MCF 10A (cell line): ENCODE measurements at regions of chr3 and their contacts with region 1.

Region 1: DNA sequence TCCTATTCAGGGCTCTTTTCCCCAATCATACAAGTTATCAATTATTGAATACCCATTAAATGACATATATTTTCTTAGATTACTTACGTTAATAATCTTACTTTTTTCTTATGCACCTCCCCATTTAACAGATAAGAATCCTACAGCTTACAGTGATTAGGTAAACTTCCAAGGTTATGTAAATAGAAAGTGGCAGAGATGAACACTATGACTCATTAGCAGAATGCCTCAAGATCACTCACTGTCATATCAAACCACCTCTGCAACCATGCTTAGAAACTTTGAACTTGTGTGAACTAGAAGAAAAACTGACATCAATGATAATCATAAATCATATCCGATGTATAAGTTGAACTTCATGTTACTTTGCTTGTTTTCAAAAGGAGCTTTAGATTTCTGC is 911.6 kb upstream of the ARPP21 start:
- DNase-seq: peak; percentile 22
- H3K4me3 Mint-ChIP-seq: no peak overlapping the region
- H3K27ac Mint-ChIP-seq: no peak overlapping the region
- H3K4me1 Mint-ChIP-seq: peaks cover 5% of the 10 kb centered on the region
- H3K27me3 Mint-ChIP-seq: no peaks in the 10 kb centered on the region
- CTCF ChIP-seq: no peak

Region 2: DNA sequence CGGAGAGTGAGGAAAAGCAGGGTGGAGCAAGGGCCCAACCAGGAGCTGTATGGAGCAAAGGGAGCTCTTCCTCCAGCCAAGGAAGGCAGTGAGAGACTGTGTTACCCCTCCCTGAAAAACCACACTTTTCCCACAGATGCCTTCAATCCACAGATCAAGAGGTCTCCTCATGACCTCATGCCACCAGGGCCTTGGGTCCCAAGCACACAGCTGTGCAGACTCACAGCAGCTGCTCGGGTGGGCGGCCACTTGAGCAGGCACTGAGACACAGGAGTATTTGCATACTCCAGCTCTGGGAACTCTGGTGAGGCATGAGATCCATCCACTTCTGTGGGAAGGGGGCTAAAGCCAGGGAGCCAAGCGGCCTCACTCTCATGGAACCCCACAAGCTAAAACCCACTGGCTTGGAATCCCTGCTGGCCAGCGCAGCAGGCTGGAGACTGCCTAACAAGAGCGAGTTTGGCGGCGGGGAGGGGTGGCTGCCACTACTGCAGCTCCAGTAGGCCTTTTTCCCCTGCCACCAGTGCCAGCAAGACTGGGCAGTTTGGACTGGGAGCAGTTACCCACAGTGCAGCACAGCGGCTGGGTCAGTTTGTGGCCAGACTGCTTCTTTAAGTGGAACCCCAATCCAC is 31.1 kb after region 1 on chr3:
- CTCF ChIA-PET with region 1: no interaction called
- POLR2A ChIA-PET with region 1: no interaction called
- intact Hi-C with region 1: loop called (anchors 1 kb)
- DNase-seq: no peak
- H3K4me3 Mint-ChIP-seq: no peak overlapping the region
- H3K27ac Mint-ChIP-seq: no peak overlapping the region
- H3K4me1 Mint-ChIP-seq: no peaks in the 10 kb centered on the region
- H3K27me3 Mint-ChIP-seq: no peaks in the 10 kb centered on the region
- CTCF ChIP-seq: no peak